HCT116 (cell line): ENCODE measurements at regions of chr6 and their contacts with region 1.

Region 1: DNA sequence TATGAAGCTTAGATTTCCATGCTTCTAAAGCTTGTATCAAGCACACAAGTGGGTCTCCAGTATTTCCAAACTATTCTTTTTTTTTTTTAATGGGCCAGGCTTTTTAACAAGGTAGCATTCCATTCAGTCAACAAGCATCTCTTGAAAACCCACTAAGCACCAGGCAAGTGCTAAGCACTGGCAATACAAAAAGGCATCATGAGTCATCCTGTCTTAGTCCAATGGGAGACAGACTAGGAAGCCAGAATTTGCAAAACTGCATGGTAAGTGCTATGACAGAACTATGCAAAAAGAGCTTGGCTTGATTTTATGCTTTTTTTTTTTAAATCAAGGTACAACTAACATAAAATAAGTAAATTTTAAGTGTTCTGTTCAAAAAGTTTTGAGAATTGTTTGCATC is 109.3 kb upstream of the DST start:
- DNase-seq: no peak
- ATAC-seq: peak; percentile 30; the same call in 1 of the 2 replicates
- H3K4me3 ChIP-seq: no peak overlapping the region
- H3K27ac ChIP-seq: peak overlapping the region; percentile 97
- H3K4me1 ChIP-seq: peaks cover 95 to 96% of the 10 kb centered on the region in 2 experiments
- H3K27me3 ChIP-seq: no peaks in the 10 kb centered on the region
- CTCF ChIP-seq: no peak
- POLR2A ChIP-seq: no peak
- RAD21 ChIP-seq: no peak

Region 2: GRCh38 chr6:56732517-56732916 is 19.5 kb before region 1 on chr6:
- CTCF ChIA-PET with region 1: no interaction called
- POLR2A ChIA-PET with region 1: interaction called, 10 read pairs
- RAD21 ChIA-PET with region 1: no interaction called
- intact Hi-C with region 1: no loop called
- DNase-seq: no peak
- ATAC-seq: no peak
- H3K4me3 ChIP-seq: no peak overlapping the region
- H3K27ac ChIP-seq: peak overlapping the region; percentile 82
- H3K4me1 ChIP-seq: peaks cover 71 to 72% of the 10 kb centered on the region in 2 experiments
- H3K27me3 ChIP-seq: no peaks in the 10 kb centered on the region
- CTCF ChIP-seq: no peak
- POLR2A ChIP-seq: no peak
- RAD21 ChIP-seq: no peak